ENCODE measurements at regions of chr19 and their contacts with region 1.

Region 1: GRCh38 chr19:34712395-34713261 is 21.4 kb upstream of the ZNF181 start:
- DNase-seq: no peak
- ATAC-seq: peak; percentile 78

Region 2: DNA sequence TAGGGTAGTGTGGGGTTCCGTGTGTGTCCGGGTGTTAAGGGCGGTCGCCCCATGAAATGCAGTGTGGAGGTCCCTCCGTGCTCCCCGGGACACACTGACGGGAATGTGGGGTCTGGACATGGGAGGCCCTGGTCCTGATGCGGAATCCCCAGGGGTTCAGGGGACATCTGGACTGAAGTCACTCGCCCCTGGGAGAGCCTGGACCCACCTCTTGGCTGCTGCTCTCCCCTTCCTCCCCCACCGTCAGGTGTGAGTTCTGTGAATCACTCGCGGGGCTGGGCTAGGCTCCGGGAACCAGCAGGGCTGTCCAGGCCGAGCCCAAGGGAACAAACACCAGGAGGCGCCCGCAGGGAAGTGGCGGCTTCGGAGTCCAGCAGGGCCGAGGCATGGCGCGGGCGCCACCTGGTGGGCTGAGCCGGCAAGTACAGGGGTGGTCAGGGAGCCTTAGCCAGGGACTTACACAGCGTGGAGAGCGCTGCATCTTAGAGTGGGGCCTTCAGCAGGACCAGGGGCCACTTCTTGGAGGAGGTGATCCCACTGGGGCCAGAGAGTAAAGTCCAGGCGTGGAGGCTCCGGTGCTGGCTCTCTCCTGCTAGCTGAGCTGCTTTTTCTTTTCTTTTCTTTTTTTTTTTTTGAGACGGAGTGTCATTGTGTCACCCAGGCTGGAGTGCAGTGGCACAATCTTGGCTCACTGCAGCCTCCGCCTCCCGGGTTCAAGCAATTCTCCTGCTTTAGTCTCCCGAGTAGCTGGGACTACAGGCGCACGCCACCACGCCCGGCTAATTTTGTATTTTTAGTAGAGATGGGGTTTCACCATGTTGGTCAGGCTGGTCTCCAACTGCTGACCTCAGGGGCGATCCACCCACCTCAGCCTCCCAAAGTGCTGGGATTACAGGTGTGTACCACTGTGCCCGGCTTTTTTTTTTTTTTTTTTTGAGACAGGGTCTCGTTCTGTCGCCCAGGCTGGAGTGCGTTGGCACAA is 211.0 kb before region 1 on chr19:
- intact Hi-C with region 1: no loop called
- DNase-seq: peak; percentile 96
- ATAC-seq: peak; percentile 88

Region 3: GRCh38 chr19:34639491-34640085 is 73.0 kb before region 1 on chr19:
- intact Hi-C with region 1: loop called (anchors 5 kb)
- DNase-seq: peak; percentile 38
- ATAC-seq: peak; percentile 69

Measured in left ventricle myocardium superior (tissue), 1 donor.